Dendritic cell treated with granulocyte-macrophage colony-stimulating factor and Interleukin-4, amounts not matched to agents 40 ng/mL and 50 ng/mL, for 4 days (primary cell): ENCODE measurements at regions of chr18 and their contacts with region 1.

Region 1: DNA sequence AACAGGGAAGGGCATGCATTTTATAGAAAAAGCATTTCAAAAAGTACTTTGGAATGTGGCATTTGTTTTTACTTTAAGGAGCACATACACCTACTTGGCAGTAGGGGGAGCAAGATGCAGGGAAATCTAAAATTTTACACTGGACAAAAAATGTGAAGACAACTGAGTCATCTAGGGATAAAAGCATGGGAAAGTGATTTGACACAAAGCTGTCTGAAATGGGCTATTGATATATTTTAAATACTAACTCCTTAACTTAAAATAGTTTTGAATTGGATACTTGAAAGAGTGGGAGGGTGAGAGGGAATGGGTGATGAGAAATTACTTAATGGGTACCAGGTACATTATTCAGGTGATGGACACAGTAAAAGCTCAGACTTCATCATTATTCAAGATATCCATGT is 15.8 kb downstream of the TMEM200C start:
- H3K4me3 Mint-ChIP-seq: no peak overlapping the region
- H3K27ac Mint-ChIP-seq: no peak overlapping the region
- H3K4me1 Mint-ChIP-seq: no peaks in the 10 kb centered on the region
- H3K27me3 Mint-ChIP-seq: peaks cover 8% of the 10 kb centered on the region

Region 2: DNA sequence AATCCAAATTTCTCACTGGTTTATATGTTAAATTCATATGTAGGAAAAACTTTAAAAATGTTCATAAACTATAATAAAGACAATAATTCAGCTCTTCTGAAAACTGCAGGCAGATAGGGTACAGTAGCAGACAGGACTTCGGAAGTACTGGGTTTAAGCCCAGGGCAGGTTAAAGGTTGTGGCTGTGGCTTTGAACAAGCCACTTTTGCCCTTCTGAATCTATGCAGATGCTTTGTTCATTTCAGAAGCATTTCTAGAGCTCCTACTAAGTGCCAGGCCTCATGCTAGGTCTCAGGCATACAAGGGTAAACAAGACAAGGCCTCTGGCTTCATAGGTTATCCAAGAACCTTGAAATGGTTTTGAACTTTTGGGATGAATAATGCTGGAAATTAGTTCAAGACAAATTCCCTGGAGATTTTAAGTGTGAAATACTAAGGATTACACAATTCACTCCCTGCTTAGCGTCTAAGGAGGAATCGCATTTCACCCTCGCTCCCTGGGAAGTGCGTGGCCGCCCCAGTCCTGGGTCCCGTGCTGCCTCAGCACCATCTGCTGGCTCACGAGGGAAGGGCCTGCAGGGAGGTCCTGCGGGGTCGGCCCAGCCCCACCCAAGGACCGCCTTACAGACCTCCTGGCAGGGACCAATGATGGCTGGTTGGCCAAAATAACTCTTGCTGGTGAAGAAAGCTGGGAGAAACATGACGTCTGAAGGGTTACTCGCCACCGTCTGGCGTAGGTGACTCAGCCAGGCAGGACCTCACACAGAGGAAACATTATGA is 602.9 kb after region 1 on chr18:
- intact Hi-C with region 1: loop called (anchors 2 kb)
- H3K4me3 Mint-ChIP-seq: no peak overlapping the region
- H3K27ac Mint-ChIP-seq: no peak overlapping the region
- H3K4me1 Mint-ChIP-seq: no peaks in the 10 kb centered on the region
- H3K27me3 Mint-ChIP-seq: peaks cover 7% of the 10 kb centered on the region